ENCODE measurements at regions of chr6 and their contacts with region 1.

Region 1: DNA sequence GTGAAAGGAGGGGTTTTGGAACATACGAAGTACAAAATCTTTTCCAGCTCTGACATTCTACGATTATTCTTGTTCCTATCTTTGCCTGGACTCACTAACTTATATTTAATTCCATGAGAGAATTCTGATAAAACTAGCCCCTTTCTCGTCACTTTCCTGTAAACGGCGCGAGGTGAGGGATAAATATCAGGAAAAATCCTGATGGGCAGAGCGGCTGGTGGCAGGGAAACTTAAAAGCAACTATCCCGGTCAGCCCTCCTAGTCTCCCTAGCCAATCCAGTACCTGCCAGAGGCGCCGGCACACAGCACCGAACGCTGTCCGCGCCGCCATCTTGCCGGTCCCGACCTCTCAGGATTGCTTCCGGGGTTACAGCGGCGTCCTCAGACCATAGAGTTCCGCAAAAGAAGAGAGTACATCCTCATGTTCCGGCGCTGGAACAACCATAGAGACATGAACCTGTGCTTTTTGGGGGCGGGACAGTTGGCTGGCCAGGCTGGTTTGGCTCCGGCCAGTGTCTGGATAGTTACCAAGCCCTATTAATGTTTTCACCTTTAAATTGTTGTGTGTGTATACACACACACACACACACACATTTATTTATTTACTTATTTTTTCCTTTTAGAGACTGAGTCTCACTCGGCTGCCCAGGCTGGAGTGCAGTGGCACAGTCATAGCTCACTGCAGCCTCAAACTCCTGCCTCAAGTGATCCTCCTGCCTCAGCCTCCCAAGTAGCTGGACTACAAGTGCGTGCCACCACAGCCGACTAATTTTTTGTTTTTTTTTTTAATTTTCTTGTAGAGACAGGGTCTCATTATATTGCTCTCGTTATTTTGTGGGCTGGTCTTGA is at the start of gene MRPS10:
- DNase-seq: peak; percentile 91
- H3K4me3 ChIP-seq: peak within 1 kb of the TSS; percentile 72
- H3K27ac ChIP-seq: peak within 1 kb of the TSS; percentile 79 to 87
- H3K4me1 ChIP-seq: peaks cover 3 to 5% of the 10 kb centered on the region in 2 experiments; a peak in 1 of 4 replicates
- H3K27me3 ChIP-seq: no peaks in the 10 kb centered on the region
- CTCF ChIP-seq: no peak
- EP300 ChIP-seq: peak; percentile 36 to 38; a peak in 2 of 4 replicates
- RAD21 ChIP-seq: no peak; the same call in 1 of the 2 replicates
- polyA plus RNA-seq, gene MRPS10: 29.8 and 35.5 TPM in 2 replicates

Region 2: DNA sequence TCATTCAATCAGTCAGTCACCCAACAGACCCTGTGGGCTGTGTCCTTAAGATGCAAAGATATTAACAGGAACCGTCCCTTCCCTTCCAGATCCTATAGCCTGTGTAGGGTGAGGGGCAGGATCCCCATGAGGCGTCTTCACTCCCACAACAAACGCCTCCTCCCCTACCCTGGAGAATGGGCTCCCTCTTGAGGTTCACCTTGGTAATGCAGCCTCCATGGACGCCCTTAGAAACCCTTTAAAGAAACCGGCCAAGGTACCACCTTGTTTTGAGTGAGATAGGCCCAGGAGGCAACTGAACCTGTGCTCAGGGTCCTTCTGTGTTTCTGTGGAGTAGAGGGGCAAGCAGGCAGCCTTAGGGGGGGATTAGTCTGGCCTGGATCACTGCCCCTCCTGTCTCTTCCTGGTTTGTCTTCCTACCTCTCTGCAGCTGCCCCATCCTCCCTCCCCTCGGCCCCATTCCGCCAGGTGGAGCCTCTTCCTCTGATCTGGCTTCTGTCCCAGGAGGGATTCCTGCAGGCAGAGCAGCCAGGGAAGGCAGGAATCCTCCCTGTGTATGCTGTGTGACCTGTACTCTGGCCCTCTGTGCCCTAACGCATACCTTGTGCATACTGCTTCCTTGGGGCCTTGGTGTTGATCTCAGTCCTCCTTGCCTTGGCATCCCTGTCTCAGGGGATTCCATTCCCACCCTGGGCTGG is 51.1 kb before region 1 on chr6:
- CTCF ChIA-PET with region 1: interaction called, 12 read pairs
- POLR2A ChIA-PET with region 1: no interaction called
- DNase-seq: peak; percentile 89
- H3K4me3 ChIP-seq: no peak overlapping the region; a peak in 1 of 4 replicates
- H3K27ac ChIP-seq: no peak overlapping the region
- H3K4me1 ChIP-seq: no peaks in the 10 kb centered on the region; a peak in 1 of 4 replicates
- H3K27me3 ChIP-seq: no peaks in the 10 kb centered on the region
- CTCF ChIP-seq: peak; percentile 95
- EP300 ChIP-seq: no peak
- RAD21 ChIP-seq: peak; percentile 97

Region 3: GRCh38 chr6:42177514-42178364 is 40.0 kb before region 1 on chr6:
- CTCF ChIA-PET with region 1: interaction called, 11 read pairs
- POLR2A ChIA-PET with region 1: no interaction called
- DNase-seq: peak; percentile 88
- H3K4me3 ChIP-seq: peak overlapping the region in 1 of 2 experiments; percentile 44; a peak in 2 of 4 replicates
- H3K27ac ChIP-seq: peak overlapping the region in 1 of 2 experiments; percentile 36; a peak in 1 of 4 replicates
- H3K4me1 ChIP-seq: peaks cover 0 to 13% of the 10 kb centered on the region in 2 experiments; a peak in 1 of 4 replicates
- H3K27me3 ChIP-seq: no peaks in the 10 kb centered on the region
- CTCF ChIP-seq: no peak
- EP300 ChIP-seq: no peak; a peak in 1 of 4 replicates
- RAD21 ChIP-seq: no peak

Region 4: GRCh38 chr6:42188406-42188805 is 29.3 kb before region 1 on chr6:
- CTCF ChIA-PET with region 1: interaction called, 17 read pairs
- POLR2A ChIA-PET with region 1: no interaction called
- DNase-seq: no peak
- H3K4me3 ChIP-seq: no peak overlapping the region
- H3K27ac ChIP-seq: no peak overlapping the region
- H3K4me1 ChIP-seq: peaks cover 5 to 8% of the 10 kb centered on the region in 2 experiments; a peak in 2 of 4 replicates
- H3K27me3 ChIP-seq: no peaks in the 10 kb centered on the region
- CTCF ChIP-seq: no peak
- EP300 ChIP-seq: no peak
- RAD21 ChIP-seq: no peak

Region 5: DNA sequence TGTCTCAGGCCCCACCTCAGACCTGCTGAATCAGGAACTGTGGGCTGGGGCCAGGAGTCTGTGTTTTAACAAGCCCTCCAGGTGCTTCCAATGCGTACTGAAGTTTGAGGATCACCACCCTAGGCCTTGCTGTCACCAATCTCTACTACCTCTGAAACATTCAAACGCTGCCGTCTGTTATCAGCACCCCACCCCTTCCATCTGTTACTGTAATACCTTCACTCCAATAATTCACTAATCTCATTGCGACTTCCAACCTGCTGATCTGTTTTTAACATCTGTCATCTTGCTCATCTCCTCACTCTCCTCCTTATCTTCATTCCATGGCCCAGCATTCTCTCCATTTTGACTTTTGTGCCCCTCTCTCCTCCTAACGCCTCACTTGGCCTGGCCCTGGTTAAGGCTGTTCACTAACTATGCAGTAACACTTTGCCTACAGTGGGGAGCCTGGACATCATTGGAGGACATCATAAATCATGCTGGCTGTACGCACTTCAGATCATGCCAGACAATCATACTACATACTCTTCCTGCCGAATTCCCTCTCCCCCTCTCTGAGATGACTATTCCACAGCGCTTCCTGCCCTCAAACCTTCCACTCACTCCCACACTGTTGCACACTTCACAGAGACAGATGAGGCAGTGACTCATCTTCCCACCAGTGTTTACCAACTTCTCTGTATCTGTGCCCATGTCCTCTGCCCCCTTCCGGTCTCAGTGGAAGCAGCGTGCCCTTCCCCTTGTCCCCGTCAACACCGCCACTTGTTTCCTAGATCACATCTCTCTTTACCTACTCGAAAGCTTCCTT is 20.0 kb before region 1 on chr6:
- CTCF ChIA-PET with region 1: interaction called, 29 read pairs
- POLR2A ChIA-PET with region 1: no interaction called
- DNase-seq: no peak
- H3K4me3 ChIP-seq: no peak overlapping the region
- H3K27ac ChIP-seq: peak overlapping the region; percentile 11 to 94
- H3K4me1 ChIP-seq: peaks cover 0 to 31% of the 10 kb centered on the region in 2 experiments; a peak in 3 of 4 replicates
- H3K27me3 ChIP-seq: no peaks in the 10 kb centered on the region
- CTCF ChIP-seq: peak; percentile 17; the same call in 1 of the 2 replicates
- EP300 ChIP-seq: peak in 1 of 2 experiments; percentile 55; a peak in 1 of 4 replicates
- RAD21 ChIP-seq: no peak

Region 6: GRCh38 chr6:42204768-42205282 is 12.9 kb before region 1 on chr6:
- CTCF ChIA-PET with region 1: interaction called, 29 read pairs
- POLR2A ChIA-PET with region 1: no interaction called
- DNase-seq: no peak
- H3K4me3 ChIP-seq: no peak overlapping the region
- H3K27ac ChIP-seq: peak overlapping the region in 1 of 2 experiments; percentile 77; a peak in 2 of 4 replicates
- H3K4me1 ChIP-seq: peaks cover 0 to 19% of the 10 kb centered on the region in 2 experiments
- H3K27me3 ChIP-seq: no peaks in the 10 kb centered on the region
- CTCF ChIP-seq: no peak
- EP300 ChIP-seq: no peak
- RAD21 ChIP-seq: no peak

Measured in SK-N-SH (cell line).